GM23248 (cell line): ENCODE measurements at regions of chr14 and their contacts with region 1.

Region 1: GRCh38 chr14:20970983-20971704 is 15.9 kb downstream of the RNASE2 start:
- DNase-seq: peak; percentile 92
- H3K4me3 ChIP-seq: peak overlapping the region; percentile 81
- H3K27ac ChIP-seq: no peak overlapping the region
- H3K4me1 ChIP-seq: peaks cover 8% of the 10 kb centered on the region
- H3K27me3 ChIP-seq: peaks cover 7% of the 10 kb centered on the region; the same call in 1 of the 2 replicates

Region 2: DNA sequence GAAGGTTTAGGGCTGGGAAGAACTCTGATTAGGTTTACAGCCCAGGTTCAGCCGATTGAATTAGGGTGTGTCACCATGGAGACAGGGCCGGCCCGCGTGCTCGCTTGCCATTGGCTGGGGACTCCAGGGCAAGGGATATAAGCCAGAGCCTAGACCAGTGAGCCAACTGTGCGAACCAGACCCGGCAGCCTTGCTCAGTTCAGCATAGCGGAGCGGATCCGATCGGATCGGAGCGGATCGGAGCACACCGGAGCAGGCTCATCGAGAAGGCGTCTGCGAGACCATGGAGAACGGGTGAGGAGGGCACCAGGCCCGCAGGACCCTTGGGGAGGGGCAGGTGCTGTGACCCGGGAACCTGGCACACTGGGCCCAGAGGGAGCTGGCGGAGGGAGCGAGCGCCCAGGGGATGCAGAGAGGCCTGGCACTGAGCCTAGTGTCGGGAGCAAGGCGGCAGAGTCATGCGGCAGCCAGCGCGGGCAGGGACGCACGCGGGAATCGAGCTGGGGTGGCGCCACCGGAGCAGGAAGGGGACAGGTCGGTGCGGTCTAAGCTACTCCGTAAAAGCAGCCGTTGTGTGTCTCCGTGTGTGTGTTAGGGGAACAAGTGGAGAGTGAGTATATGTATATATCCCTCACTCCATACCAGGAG is 501.8 kb before region 1 on chr14 and contains the start of gene PNP:
- in situ Hi-C with region 1: no loop called
- DNase-seq: peak; percentile 95
- H3K4me3 ChIP-seq: peak within 1 kb of the TSS; percentile 93
- H3K27ac ChIP-seq: peak within 1 kb of the TSS; percentile 85
- H3K4me1 ChIP-seq: no peaks in the 10 kb centered on the region
- H3K27me3 ChIP-seq: no peaks in the 10 kb centered on the region
- total RNA-seq, gene PNP: 23.6 and 39.6 TPM in 2 replicates

Region 3: DNA sequence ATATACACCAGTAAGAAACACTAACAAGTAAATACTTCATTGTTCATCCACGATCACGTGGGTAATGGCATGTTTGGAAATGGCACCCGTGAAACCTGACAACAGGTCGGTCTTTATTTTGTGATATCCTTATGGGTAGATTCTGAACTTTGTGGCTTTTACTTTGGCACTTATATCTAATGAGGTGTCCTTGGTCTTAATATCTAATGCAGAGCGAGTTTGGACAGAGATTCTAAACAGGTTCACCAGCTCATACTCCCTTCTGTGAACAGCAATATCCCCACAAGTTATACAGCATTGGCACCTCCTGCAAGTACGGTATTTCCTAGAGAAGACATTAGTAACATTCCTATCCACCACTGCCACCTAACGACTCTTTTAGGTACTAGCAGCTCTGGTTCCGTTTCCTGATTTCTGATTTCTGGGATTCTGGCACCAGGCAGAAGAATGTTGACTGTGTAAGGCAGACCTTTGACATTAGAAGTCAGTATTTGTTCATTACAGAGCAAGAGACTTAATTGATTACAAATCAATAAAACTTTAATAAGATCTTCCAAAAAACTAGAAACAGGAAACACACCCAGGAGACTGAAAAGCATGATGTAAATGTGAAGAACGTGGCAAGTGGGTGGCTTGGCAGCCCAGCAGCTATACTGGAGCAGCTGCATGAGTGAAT is 280.2 kb before region 1 on chr14:
- in situ Hi-C with region 1: loop called (anchors 10 kb)
- DNase-seq: peak; percentile 84
- H3K4me3 ChIP-seq: no peak overlapping the region
- H3K27ac ChIP-seq: no peak overlapping the region
- H3K4me1 ChIP-seq: peaks cover 12% of the 10 kb centered on the region; the same call in 1 of the 2 replicates
- H3K27me3 ChIP-seq: no peaks in the 10 kb centered on the region

Region 4: GRCh38 chr14:20855652-20856291 is 115.4 kb before region 1 on chr14:
- in situ Hi-C with region 1: loop called (anchors 10 kb)
- DNase-seq: peak; percentile 78
- H3K4me3 ChIP-seq: no peak overlapping the region
- H3K27ac ChIP-seq: no peak overlapping the region
- H3K4me1 ChIP-seq: no peaks in the 10 kb centered on the region
- H3K27me3 ChIP-seq: peaks cover 13% of the 10 kb centered on the region; the same call in 1 of the 2 replicates